Right cardiac atrium (tissue), 5 donors: ENCODE measurements at regions of chr12 and their contacts with region 1.

Region 1: DNA sequence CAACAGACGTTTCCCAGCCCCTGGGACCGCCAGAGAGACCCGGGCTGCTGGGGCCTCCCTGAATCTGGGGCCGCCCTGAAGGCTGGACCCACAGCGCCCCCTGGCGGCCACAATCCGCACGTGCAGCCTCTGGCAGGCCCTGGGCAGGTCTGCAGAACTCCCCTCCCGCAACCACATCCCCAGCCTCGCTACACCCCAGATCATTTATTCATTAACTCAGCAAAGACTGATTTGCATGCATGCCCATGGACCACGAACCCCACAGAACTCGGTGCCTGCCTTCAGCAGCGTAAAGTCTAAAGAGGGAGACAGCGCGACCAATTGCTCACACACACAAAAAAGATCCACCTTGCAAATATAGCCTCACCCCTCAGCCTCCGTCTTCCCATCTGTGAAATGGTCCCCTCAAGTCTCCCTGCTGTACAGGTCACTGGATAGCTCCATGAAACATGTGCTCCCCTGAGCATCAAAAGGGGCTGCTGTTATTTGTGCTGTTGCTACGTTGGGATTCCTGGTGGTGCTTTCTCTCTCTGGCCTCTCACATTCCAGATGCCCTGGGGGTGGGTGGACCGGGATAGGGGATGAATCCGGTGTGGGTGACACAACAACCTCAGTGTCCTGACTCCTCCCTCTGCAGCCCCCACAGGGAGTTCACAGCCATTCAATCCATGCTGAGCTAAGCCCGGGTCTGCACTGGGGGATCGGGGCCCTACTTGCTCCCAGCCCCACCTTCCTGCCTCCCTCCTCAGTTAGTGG is 96.4 kb downstream of the SCARB1 start:
- DNase-seq: peak; percentile 79 to 93 (median 93)
- ATAC-seq: peak; percentile 76 to 80
- H3K4me3 ChIP-seq: no peak overlapping the region
- H3K27ac ChIP-seq: no peak overlapping the region
- H3K4me1 ChIP-seq: peaks cover 12% of the 10 kb centered on the region
- H3K27me3 ChIP-seq: no peaks in the 10 kb centered on the region

Region 2: DNA sequence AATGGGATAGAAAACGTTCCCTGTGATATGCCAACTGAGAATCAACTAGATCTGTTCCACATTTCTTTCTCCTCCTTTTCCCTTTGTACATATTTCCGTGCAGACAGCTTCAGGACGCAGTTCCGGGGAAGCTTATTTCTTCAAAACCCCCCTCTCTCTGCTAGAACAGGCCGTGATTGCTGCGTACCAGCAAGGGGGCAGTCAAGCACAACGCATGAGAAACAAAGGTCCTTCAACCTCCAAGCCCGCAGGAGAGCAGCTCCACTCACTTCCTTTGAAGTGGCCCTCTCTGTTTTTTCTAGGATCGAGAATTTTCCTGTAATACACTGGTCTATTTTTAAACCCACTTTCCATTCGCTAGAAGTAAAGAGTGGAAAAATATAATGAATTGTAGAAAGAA is 713.4 kb before region 1 on chr12:
- intact Hi-C with region 1: loop called in 3 of 4 experiments (anchors 5 kb)
- DNase-seq: peak; percentile 51 to 83 (median 68)
- ATAC-seq: peak; percentile 93 to 94
- H3K4me3 ChIP-seq: no peak overlapping the region
- H3K27ac ChIP-seq: no peak overlapping the region
- H3K4me1 ChIP-seq: no peaks in the 10 kb centered on the region
- H3K27me3 ChIP-seq: no peaks in the 10 kb centered on the region

Region 3: GRCh38 chr12:124347716-124348357 is 419.4 kb before region 1 on chr12:
- intact Hi-C with region 1: loop called in 2 of 4 experiments (anchors 10 kb)
- DNase-seq: peak in 1 of 3 donors; percentile 75
- ATAC-seq: no peak
- H3K4me3 ChIP-seq: no peak overlapping the region
- H3K27ac ChIP-seq: no peak overlapping the region
- H3K4me1 ChIP-seq: peaks cover 2% of the 10 kb centered on the region
- H3K27me3 ChIP-seq: no peaks in the 10 kb centered on the region

Region 4: DNA sequence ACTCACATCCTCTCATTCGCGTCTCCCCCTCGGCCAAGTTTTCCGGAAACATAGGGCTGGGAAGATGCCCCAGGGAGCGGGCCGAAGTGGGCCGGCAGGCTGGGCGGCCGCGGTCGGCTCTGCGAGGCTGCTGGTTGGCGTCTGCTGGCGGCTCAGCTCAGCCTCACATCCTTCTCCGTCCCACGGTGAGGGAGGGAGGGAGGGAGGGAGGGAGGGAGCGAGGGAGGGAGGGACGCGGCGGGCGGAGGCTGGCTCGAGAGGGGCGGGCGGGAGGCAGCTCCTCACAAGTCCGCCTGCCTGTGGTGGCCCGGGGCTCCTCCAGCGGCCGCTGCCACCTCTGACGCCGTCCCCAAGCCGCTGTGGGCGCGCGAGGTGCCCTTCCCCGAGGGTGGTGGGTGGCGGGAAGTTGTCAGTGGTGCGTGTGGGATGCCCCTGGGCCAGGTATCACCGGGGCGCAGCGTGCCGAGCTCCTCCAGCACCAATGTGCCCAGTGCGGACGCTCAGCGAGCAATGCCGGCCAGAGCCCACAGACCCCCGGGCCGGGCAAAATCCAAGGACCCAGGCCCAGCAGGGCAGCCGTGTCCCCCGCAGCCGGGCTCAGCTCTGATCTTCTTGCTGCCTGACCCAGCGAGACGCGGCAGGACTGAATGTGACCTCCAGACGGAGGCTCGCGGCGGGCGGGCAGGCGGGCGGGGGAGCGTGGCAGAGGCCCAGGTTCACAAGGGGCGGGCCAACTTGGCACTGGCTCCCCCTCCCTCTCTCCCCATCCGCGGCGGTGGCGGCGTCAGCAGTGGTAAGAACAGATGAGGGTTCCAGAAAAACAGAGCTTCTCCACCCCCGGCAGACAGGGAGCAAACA is 378.3 kb before region 1 on chr12:
- intact Hi-C with region 1: loop called in 1 of 4 experiments (anchors 10 kb)
- DNase-seq: peak; percentile 93 to 96 (median 96)
- ATAC-seq: peak; percentile 70 to 75
- H3K4me3 ChIP-seq: peak overlapping the region; percentile 53
- H3K27ac ChIP-seq: peak overlapping the region; percentile 88
- H3K4me1 ChIP-seq: peaks cover 21% of the 10 kb centered on the region
- H3K27me3 ChIP-seq: no peaks in the 10 kb centered on the region

Region 5: DNA sequence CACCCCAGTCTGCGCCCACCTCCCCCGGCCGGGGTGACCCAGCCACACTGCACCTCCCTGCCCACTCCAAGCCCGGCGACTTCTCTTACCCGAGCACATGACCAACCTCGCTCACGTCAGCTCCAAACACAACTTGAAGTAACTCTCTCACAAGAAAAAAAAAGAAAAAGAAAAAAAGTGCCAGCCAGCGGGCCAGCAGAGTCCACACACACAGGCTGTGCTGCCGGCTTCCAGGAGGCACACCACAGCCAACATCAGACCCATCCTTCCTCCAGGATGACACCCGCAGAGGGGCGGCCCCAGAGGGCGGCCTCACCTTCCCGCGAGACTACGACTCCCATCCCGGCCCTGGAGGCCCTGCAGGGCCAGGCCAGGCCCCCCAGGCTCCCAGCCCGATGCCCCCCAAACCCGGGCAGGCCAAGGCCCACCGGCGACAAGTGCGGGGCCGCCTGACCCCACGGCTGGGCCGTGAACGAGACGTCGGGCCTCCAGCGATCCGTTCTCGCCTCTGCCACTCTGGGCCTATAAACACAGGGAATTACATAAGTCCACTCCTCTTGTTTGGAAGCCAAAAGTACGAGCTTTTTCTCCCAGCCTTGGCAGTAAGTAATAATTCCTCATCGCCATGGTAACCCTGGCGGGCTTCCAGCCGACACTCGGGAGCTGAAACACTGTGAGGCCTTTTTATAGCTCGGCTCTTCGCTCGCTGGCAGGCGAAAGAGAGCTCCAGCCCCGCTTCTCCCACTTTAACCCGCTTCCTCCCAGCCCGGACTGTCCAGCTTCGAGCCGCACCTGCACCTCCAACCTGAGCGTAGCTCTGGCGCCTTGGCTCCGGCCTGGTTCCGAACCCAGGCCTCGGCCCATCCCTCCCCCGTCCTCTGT is 249.0 kb before region 1 on chr12:
- intact Hi-C with region 1: loop called in 2 of 4 experiments (anchors 5 to 10 kb)
- DNase-seq: peak; percentile 99 to 100 (median 99)
- ATAC-seq: peak; percentile 73 to 78
- H3K4me3 ChIP-seq: peak overlapping the region; percentile 35
- H3K27ac ChIP-seq: peak overlapping the region; percentile 100
- H3K4me1 ChIP-seq: peaks cover 24% of the 10 kb centered on the region
- H3K27me3 ChIP-seq: no peaks in the 10 kb centered on the region

Region 6: GRCh38 chr12:124576061-124576650 is 191.1 kb before region 1 on chr12:
- intact Hi-C with region 1: no loop called
- DNase-seq: no peak
- ATAC-seq: no peak
- H3K4me3 ChIP-seq: no peak overlapping the region
- H3K27ac ChIP-seq: no peak overlapping the region
- H3K4me1 ChIP-seq: no peaks in the 10 kb centered on the region
- H3K27me3 ChIP-seq: no peaks in the 10 kb centered on the region

Region 7: GRCh38 chr12:124675881-124676715 is 91.1 kb before region 1 on chr12:
- intact Hi-C with region 1: loop called in 1 of 4 experiments (anchors 5 kb)
- DNase-seq: peak; percentile 73 to 78 (median 75)
- ATAC-seq: peak; percentile 64 to 75
- H3K4me3 ChIP-seq: no peak overlapping the region
- H3K27ac ChIP-seq: peak overlapping the region; percentile 34
- H3K4me1 ChIP-seq: peaks cover 5% of the 10 kb centered on the region
- H3K27me3 ChIP-seq: no peaks in the 10 kb centered on the region

Region 8: GRCh38 chr12:124694846-124695497 is 72.3 kb before region 1 on chr12:
- intact Hi-C with region 1: no loop called
- DNase-seq: peak; percentile 87 to 91 (median 90)
- ATAC-seq: peak; percentile 47 to 87
- H3K4me3 ChIP-seq: no peak overlapping the region
- H3K27ac ChIP-seq: peak overlapping the region; percentile 84
- H3K4me1 ChIP-seq: peaks cover 2% of the 10 kb centered on the region
- H3K27me3 ChIP-seq: no peaks in the 10 kb centered on the region

Region 9: GRCh38 chr12:124939428-124940142 is 172.3 kb after region 1 on chr12:
- intact Hi-C with region 1: no loop called
- DNase-seq: peak; percentile 85 to 94 (median 93)
- ATAC-seq: peak; percentile 87 to 89
- H3K4me3 ChIP-seq: peak overlapping the region; percentile 52
- H3K27ac ChIP-seq: peak overlapping the region; percentile 84
- H3K4me1 ChIP-seq: peaks cover 2% of the 10 kb centered on the region
- H3K27me3 ChIP-seq: no peaks in the 10 kb centered on the region